Stomach (tissue), 19 donors: ENCODE measurements at regions of chr5 and their contacts with region 1.

Region 1: GRCh38 chr5:172697123-172698121 is 56.4 kb downstream of the NEURL1B start:
- DNase-seq: peak; percentile 93 to 96
- H3K4me3 ChIP-seq: peak overlapping the region; percentile 51 to 62 (median 56)
- H3K27ac ChIP-seq: peak overlapping the region; percentile 31 to 84 (median 79)
- H3K4me1 ChIP-seq: peaks cover 13 to 43% (median 29%) of the 10 kb centered on the region in 4 donors
- H3K27me3 ChIP-seq: peaks cover 0 to 18% (median 4%) of the 10 kb centered on the region in 3 donors
- CTCF ChIP-seq: peak in 5 of 7 experiments; percentile 79 to 95 (median 91)
- EP300 ChIP-seq: no peak
- POLR2A ChIP-seq: no peak

Region 2: GRCh38 chr5:171728686-171729085 is 968.7 kb before region 1 on chr5:
- intact Hi-C with region 1: no loop called
- DNase-seq: no peak
- H3K4me3 ChIP-seq: no peak overlapping the region
- H3K27ac ChIP-seq: no peak overlapping the region
- H3K4me1 ChIP-seq: no peaks in the 10 kb centered on the region
- H3K27me3 ChIP-seq: no peaks in the 10 kb centered on the region
- CTCF ChIP-seq: no peak
- EP300 ChIP-seq: no peak
- POLR2A ChIP-seq: no peak

Region 3: DNA sequence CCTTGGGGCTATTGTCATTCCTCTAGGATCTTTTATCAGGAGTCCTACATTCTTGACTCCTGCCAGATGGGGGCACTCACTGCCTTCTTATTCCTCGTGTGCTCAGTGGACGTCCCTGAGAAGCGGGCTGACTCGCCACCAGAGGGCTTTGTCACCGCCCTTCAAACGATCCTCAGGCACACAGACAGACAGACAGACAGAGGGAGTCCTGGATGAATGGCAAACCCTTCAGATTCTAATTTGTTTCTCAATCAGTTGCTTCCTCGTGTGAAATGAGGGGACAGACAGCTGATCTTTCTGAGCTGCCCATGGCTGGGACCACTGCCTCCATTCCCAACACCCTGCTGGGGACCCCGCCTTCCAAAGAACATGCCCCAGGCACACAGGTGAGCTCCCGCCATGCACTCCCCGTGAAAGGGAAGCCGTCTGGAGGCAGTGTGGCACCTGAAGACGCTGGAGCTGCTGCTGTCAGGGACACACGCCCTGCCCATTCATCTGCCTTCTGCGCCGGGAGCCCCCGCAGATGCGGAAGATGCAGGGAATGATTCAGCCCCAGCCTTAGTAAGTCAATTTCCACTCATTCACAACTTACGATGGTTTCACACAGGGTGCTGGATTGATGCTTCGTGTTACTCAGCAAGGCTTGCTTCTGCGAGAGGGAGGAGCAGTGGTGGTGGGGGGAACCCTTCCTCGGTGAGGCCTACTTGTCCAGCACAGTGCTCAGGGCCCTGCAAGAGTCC is 218.2 kb before region 1 on chr5:
- intact Hi-C with region 1: loop called (anchors 5 kb)
- DNase-seq: peak; percentile 83 to 96
- H3K4me3 ChIP-seq: no peak overlapping the region
- H3K27ac ChIP-seq: peak overlapping the region in 2 of 5 donors; percentile 3 to 28
- H3K4me1 ChIP-seq: peaks cover 0 to 6% (median 2%) of the 10 kb centered on the region in 4 donors
- H3K27me3 ChIP-seq: no peaks in the 10 kb centered on the region
- CTCF ChIP-seq: peak in 6 of 7 experiments; percentile 8 to 97 (median 82)
- EP300 ChIP-seq: no peak
- POLR2A ChIP-seq: no peak

Region 4: DNA sequence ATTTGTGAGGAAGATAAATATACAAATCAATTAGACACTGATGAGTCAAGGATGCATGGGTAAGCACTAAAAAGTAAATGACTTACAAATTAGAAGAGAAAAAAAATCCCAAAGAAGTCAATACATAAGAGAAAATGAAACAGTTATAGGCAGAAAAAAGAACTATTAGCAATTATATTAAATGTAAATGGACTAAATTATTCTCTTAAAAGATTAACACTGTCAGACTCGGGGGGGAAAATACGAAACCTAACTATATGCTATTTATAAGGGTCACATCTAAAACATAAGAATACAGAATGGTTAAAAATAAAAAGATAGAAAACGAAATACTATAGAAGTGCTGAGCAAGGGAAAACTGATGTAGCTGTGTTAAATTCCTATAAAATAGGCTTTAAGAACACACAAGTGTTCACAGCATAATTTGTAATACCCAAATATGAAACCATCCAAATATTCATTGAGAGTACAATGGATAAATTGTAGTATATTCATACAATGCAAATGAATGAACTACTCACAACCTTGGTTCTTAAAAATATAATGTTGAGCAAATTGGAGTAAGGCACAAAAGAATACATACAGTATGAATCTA is 176.0 kb before region 1 on chr5:
- intact Hi-C with region 1: no loop called
- DNase-seq: no peak
- H3K4me3 ChIP-seq: no peak overlapping the region
- H3K27ac ChIP-seq: no peak overlapping the region
- H3K4me1 ChIP-seq: peaks cover 0 to 22% (median 3%) of the 10 kb centered on the region in 4 donors
- H3K27me3 ChIP-seq: no peaks in the 10 kb centered on the region
- CTCF ChIP-seq: no peak
- EP300 ChIP-seq: no peak
- POLR2A ChIP-seq: no peak